ENCODE measurements at regions of chr14 and their contacts with region 1.

Region 1: DNA sequence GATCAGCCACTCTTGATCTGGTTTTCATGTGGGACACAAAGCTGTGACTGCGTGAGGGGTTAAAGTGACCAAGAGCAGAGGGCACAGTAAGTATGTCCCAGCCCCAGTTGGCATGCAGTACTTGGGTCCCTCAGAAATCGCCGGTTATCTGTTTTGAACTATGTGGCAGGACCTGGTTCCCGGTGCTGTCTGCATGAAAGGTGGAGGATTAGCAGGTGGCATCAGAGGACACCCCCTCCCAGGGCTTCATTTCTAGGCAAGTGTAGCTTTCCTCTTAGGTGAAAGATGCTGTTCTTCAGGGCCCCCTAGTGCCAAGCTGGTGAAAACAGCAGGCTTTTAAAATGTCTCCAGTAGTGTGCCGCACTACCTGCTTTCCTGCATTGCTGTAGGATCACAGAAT is 57.1 kb downstream of the ATG14 start:
- DNase-seq: no peak
- ATAC-seq: peak; percentile 97
- H3K4me3 ChIP-seq: no peak overlapping the region
- H3K27ac ChIP-seq: no peak overlapping the region
- H3K4me1 ChIP-seq: peaks cover 2% of the 10 kb centered on the region
- H3K27me3 ChIP-seq: no peaks in the 10 kb centered on the region
- CTCF ChIP-seq: peak; percentile 70 to 85 (median 72)
- EP300 ChIP-seq: no peak
- POLR2A ChIP-seq: no peak
- RAD21 ChIP-seq: peak; percentile 93

Region 2: DNA sequence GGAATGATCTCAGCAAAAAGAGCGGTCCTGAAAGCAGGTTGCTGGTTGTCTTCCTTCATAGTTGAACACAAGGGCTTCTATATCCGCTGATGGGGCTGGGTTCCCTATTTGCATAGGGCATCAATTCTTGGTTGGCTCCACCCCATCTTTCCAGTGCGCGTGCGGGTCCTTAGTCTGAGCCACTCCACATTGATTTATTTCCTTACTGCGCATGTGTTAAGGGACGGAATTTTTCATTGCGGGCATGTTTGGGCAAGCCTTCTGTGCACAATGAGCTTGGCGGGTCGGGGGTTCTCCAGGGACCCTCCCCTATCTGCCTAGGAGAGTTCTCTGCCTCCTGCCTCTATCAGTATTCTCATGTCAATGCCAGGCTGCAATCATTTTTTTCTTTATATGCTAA is 141.9 kb before region 1 on chr14:
- CTCF ChIA-PET with region 1: interaction called, 64 read pairs
- POLR2A ChIA-PET with region 1: interaction called, 3 read pairs
- RAD21 ChIA-PET with region 1: interaction called, 28 read pairs
- SMC1A ChIA-PET with region 1: interaction called, 37 read pairs
- in situ Hi-C with region 1: no loop called
- intact Hi-C with region 1: loop called (anchors 1 kb)
- DNase-seq: no peak
- ATAC-seq: no peak
- H3K4me3 ChIP-seq: no peak overlapping the region
- H3K27ac ChIP-seq: no peak overlapping the region
- H3K4me1 ChIP-seq: no peaks in the 10 kb centered on the region
- H3K27me3 ChIP-seq: no peaks in the 10 kb centered on the region
- CTCF ChIP-seq: no peak
- EP300 ChIP-seq: no peak
- POLR2A ChIP-seq: no peak
- RAD21 ChIP-seq: no peak

Region 3: DNA sequence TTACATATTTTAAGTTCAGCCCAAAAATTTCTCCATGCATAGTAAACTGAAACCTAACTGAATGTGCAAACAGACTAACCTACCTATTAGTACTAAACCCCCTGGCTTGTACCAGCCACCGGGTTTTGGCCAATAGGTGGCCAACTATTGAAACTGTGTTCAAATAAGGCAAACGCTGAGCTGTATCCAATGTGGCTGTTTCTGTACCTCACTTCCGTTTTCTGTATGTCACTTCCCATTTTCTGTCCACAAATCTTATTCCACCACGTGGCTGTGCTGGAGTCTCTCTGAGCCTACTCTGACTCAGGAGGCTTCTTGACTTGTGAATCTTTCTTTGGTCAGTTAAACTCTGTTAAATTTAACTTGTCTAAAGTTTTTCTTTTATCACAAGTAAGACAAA is 89.3 kb before region 1 on chr14:
- CTCF ChIA-PET with region 1: interaction called, 255 read pairs
- POLR2A ChIA-PET with region 1: interaction called, 4 read pairs
- RAD21 ChIA-PET with region 1: interaction called, 65 read pairs
- SMC1A ChIA-PET with region 1: interaction called, 161 read pairs
- in situ Hi-C with region 1: loop called (anchors 5 kb)
- intact Hi-C with region 1: no loop called
- DNase-seq: no peak
- ATAC-seq: peak; percentile 87
- H3K4me3 ChIP-seq: no peak overlapping the region; the same call in 1 of the 2 replicates
- H3K27ac ChIP-seq: no peak overlapping the region
- H3K4me1 ChIP-seq: no peaks in the 10 kb centered on the region
- H3K27me3 ChIP-seq: no peaks in the 10 kb centered on the region; a peak in 1 of 4 replicates
- CTCF ChIP-seq: no peak; a peak in 1 of 6 replicates
- EP300 ChIP-seq: no peak
- POLR2A ChIP-seq: no peak
- RAD21 ChIP-seq: no peak

Region 4: GRCh38 chr14:55327179-55327578 is 27.3 kb before region 1 on chr14:
- CTCF ChIA-PET with region 1: interaction called, 18 read pairs
- POLR2A ChIA-PET with region 1: no interaction called
- RAD21 ChIA-PET with region 1: interaction called, 23 read pairs
- SMC1A ChIA-PET with region 1: interaction called, 41 read pairs
- in situ Hi-C with region 1: no loop called
- intact Hi-C with region 1: no loop called
- DNase-seq: no peak
- ATAC-seq: peak; percentile 94
- H3K4me3 ChIP-seq: no peak overlapping the region
- H3K27ac ChIP-seq: peak overlapping the region; percentile 25; the same call in 1 of the 2 replicates
- H3K4me1 ChIP-seq: peaks cover 26% of the 10 kb centered on the region
- H3K27me3 ChIP-seq: no peaks in the 10 kb centered on the region
- CTCF ChIP-seq: no peak
- EP300 ChIP-seq: no peak
- POLR2A ChIP-seq: no peak
- RAD21 ChIP-seq: no peak

Region 5: GRCh38 chr14:55339770-55340169 is 14.7 kb before region 1 on chr14:
- CTCF ChIA-PET with region 1: interaction called, 12 read pairs
- POLR2A ChIA-PET with region 1: no interaction called
- RAD21 ChIA-PET with region 1: interaction called, 23 read pairs
- SMC1A ChIA-PET with region 1: interaction called, 41 read pairs
- in situ Hi-C with region 1: no loop called
- intact Hi-C with region 1: no loop called
- DNase-seq: no peak
- ATAC-seq: peak; percentile 90
- H3K4me3 ChIP-seq: no peak overlapping the region
- H3K27ac ChIP-seq: no peak overlapping the region
- H3K4me1 ChIP-seq: peaks cover 11% of the 10 kb centered on the region
- H3K27me3 ChIP-seq: no peaks in the 10 kb centered on the region
- CTCF ChIP-seq: no peak
- EP300 ChIP-seq: no peak
- POLR2A ChIP-seq: no peak
- RAD21 ChIP-seq: no peak

Region 6: GRCh38 chr14:55373784-55374705 is 19.5 kb after region 1 on chr14:
- CTCF ChIA-PET with region 1: interaction called, 28 read pairs
- POLR2A ChIA-PET with region 1: no interaction called
- RAD21 ChIA-PET with region 1: interaction called, 5 read pairs
- SMC1A ChIA-PET with region 1: interaction called, 4 read pairs
- in situ Hi-C with region 1: no loop called
- intact Hi-C with region 1: no loop called
- DNase-seq: peak; percentile 20
- ATAC-seq: peak; percentile 84
- H3K4me3 ChIP-seq: no peak overlapping the region
- H3K27ac ChIP-seq: peak overlapping the region; percentile 42
- H3K4me1 ChIP-seq: peaks cover 6% of the 10 kb centered on the region; the same call in 1 of the 2 replicates
- H3K27me3 ChIP-seq: no peaks in the 10 kb centered on the region
- CTCF ChIP-seq: no peak
- EP300 ChIP-seq: no peak
- POLR2A ChIP-seq: no peak
- RAD21 ChIP-seq: no peak